CD8-positive, alpha-beta T cell (primary cell): ENCODE measurements at regions of chr13 and their contacts with region 1.

Region 1: DNA sequence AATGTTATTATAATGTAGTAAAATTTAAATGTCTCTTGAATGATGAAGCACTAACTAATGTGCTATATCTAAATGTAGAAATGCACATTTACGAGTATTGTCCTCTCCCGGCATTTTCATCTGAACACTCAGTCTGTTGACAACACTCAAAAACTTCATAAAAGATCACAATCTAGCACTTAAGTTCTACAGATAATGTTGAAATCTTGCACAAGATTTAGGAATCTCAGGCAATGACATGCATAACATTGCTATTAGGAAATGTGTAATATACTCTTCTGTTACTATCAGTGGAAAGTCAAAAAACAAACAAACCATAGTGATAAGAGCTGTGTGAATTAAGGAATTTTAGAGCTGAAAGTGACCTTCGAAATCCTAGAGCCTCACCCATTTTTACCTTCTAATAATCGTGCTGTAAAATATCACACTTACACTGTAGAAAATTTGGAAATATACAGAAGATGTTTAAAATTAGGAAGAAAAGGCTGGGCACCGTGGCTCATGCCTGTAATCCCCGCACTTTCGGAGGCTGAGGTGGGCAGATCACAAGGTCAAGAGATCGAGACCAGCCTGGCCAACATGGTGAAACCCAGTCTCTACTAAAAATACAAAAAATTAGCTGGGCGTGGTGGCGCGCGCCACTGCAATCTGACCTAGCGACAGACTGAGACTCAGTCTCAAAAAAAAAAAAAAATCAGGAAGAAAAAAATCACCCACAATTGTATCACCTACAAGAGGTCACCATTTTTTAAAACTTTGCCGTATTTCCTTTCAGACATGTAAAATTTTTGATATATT is 37.7 kb upstream of the XPO4 start:
- DNase-seq: no peak
- ATAC-seq: no peak
- H3K4me3 ChIP-seq: no peak overlapping the region
- H3K4me3 Mint-ChIP-seq: no peak overlapping the region
- H3K27ac ChIP-seq: no peak overlapping the region
- H3K27ac Mint-ChIP-seq: no peak overlapping the region
- H3K4me1 ChIP-seq: no peaks in the 10 kb centered on the region
- H3K4me1 Mint-ChIP-seq: no peaks in the 10 kb centered on the region
- H3K27me3 ChIP-seq: peaks cover 0 to 4% of the 10 kb centered on the region in 2 experiments
- H3K27me3 Mint-ChIP-seq: peaks cover 22% of the 10 kb centered on the region
- CTCF ChIP-seq: no peak

Region 2: GRCh38 chr13:21022056-21022979 is 82.0 kb after region 1 on chr13:
- CTCF ChIA-PET with region 1: no interaction called
- POLR2A ChIA-PET with region 1: no interaction called
- intact Hi-C with region 1: no loop called
- DNase-seq: no peak
- ATAC-seq: no peak
- H3K4me3 ChIP-seq: no peak overlapping the region
- H3K4me3 Mint-ChIP-seq: no peak overlapping the region
- H3K27ac ChIP-seq: no peak overlapping the region
- H3K27ac Mint-ChIP-seq: no peak overlapping the region
- H3K4me1 ChIP-seq: no peaks in the 10 kb centered on the region
- H3K4me1 Mint-ChIP-seq: peaks cover 1% of the 10 kb centered on the region
- H3K27me3 ChIP-seq: no peaks in the 10 kb centered on the region
- H3K27me3 Mint-ChIP-seq: no peaks in the 10 kb centered on the region
- CTCF ChIP-seq: no peak

Region 3: DNA sequence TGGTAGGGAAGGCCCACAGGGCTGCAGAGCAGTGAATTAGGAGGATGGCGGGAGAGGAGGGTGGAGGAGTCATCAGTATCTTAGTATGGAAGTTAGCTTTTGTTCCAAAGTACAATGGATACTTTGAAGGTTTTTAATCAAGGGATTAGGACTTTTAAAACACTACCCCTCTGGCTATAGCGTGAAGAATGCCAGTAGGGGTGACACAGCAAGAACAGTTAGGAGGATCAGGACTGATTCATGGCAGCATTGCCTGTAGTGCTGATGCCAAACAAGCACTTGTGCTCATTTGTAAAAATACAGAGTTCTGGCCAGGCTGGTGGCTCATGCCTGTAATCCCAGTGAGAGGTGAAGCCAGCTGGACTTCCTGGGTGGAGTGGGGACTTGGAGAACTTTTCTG is 189.8 kb after region 1 on chr13:
- CTCF ChIA-PET with region 1: no interaction called
- POLR2A ChIA-PET with region 1: no interaction called
- intact Hi-C with region 1: loop called in 1 of 2 experiments (anchors 5 kb)
- DNase-seq: no peak
- ATAC-seq: no peak
- H3K4me3 ChIP-seq: no peak overlapping the region
- H3K4me3 Mint-ChIP-seq: no peak overlapping the region
- H3K27ac ChIP-seq: no peak overlapping the region
- H3K27ac Mint-ChIP-seq: no peak overlapping the region
- H3K4me1 ChIP-seq: no peaks in the 10 kb centered on the region
- H3K4me1 Mint-ChIP-seq: no peaks in the 10 kb centered on the region
- H3K27me3 ChIP-seq: no peaks in the 10 kb centered on the region
- H3K27me3 Mint-ChIP-seq: no peaks in the 10 kb centered on the region
- CTCF ChIP-seq: no peak

Region 4: GRCh38 chr13:21181671-21182070 is 241.4 kb after region 1 on chr13:
- CTCF ChIA-PET with region 1: interaction called, 6 read pairs
- POLR2A ChIA-PET with region 1: interaction called, 3 read pairs
- intact Hi-C with region 1: loop called in 1 of 2 experiments (anchors 5 kb)
- DNase-seq: no peak
- ATAC-seq: no peak
- H3K4me3 ChIP-seq: no peak overlapping the region
- H3K4me3 Mint-ChIP-seq: no peak overlapping the region
- H3K27ac ChIP-seq: no peak overlapping the region
- H3K27ac Mint-ChIP-seq: no peak overlapping the region
- H3K4me1 ChIP-seq: peaks cover 13% of the 10 kb centered on the region
- H3K4me1 Mint-ChIP-seq: peaks cover 20% of the 10 kb centered on the region
- H3K27me3 ChIP-seq: no peaks in the 10 kb centered on the region
- H3K27me3 Mint-ChIP-seq: no peaks in the 10 kb centered on the region
- CTCF ChIP-seq: no peak